ENCODE measurements at regions of chr22 and their contacts with region 1.

Region 1: DNA sequence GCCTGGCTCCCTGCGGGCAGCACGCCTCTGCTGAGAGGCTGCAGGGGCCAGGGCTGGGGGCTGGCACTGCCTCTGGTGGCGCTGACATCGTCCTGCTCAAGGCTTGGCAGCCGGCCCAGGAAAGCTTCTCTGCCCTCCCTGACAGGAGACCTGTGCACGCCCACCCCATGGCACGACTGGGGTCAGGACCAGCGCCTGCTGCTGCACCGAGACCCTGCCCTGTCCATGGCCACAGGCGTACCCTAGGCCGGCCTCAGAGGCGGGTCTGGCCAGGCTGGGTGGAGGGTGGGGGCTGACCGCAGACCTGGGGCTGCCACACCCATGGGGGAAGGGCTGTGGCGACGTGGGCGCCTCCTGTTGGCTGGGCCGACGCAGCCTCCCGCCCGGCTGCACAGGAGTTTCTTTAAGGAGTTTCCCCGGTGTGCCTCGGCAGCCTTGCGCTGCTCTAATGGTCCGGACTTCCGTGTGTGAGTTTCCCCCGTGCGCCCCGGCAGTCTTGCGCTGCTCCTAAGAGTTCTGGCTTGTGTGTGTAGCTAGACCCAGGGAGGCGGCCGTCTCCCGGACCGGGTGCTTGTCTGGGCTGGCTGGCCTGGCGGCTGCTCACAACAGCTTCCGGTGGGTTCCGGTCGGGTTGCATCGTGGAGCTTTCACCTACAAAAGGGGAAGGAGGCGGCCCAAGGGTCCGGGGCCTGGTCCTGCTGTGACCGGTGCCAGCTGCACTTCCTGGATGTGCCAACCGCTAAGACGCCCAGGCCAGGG is 4.6 kb downstream of the TRABD start:
- DNase-seq: peak; percentile 72 to 93 (median 82)
- ATAC-seq: peak; percentile 51
- H3K4me3 Mint-ChIP-seq: peak overlapping the region; percentile 85 to 95 (median 90)
- H3K27ac Mint-ChIP-seq: peak overlapping the region; percentile 94 to 100 (median 100)
- H3K4me1 Mint-ChIP-seq: peaks cover 18 to 62% (median 51%) of the 10 kb centered on the region in 4 donors
- H3K27me3 Mint-ChIP-seq: no peaks in the 10 kb centered on the region

Region 2: DNA sequence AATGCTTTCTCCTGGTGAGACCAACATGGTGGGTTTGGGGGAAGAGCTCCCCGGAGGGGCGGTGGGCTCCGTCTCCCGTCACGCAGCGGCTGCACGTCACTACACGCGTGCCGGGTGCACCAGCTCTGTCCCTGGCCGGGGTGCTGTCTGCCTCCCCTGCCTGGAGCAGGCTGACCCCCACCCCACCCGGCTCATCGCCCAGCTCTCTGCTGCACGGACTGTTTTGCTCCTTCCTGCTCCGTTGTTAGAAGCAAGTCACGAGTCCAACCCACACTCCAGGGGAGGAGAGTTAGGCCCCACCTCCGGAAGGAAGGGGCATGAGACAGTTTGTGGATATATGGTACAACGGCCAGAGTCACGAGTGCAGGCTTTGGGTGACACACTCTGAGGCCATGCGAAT is 727.6 kb before region 1 on chr22:
- POLR2A ChIA-PET with region 1: no interaction called
- DNase-seq: no peak
- ATAC-seq: no peak
- H3K4me3 Mint-ChIP-seq: no peak overlapping the region
- H3K27ac Mint-ChIP-seq: no peak overlapping the region
- H3K4me1 Mint-ChIP-seq: peaks cover 0 to 2% (median 0%) of the 10 kb centered on the region in 4 donors
- H3K27me3 Mint-ChIP-seq: peaks cover 0 to 18% (median 5%) of the 10 kb centered on the region in 5 donors

Region 3: DNA sequence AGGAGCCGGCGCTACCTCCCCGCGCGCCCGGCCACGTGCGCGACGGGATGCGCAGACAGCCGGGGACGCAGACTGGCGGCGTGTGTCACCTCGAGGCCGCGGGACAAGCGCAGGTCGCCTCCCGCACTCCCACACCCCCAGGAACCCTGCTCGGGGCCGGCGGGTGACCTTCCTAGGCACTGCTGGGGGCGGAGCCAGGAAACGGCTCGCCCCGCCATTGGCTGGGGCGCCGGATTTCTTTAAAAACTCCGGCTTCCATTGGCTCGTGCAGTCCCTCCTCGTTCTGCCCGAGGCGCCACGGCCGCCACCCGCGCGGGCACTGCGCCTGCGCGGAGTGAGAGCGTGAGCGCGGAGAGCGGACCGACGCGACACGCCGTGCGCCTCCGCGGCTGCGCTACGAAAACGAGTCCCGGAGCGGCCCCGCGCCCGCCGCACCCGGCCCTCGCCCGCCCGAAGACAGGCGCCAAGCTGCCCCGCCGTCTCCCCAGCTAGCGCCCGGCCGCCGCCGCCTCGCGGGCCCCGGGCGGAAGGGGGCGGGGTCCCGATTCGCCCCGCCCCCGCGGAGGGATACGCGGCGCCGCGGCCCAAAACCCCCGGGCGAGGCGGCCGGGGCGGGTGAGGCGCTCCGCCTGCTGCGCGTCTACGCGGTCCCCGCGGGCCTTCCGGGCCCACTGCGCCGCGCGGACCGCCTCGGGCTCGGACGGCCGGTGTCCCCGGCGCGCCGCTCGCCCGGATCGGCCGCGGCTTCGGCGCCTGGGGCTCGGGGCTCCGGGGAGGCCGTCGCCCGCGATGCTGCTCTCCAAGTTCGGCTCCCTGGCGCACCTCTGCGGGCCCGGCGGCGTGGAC is 230.0 kb before region 1 on chr22 and contains the start of gene PIM3:
- POLR2A ChIA-PET with region 1: interaction called, 10 read pairs
- DNase-seq: peak; percentile 85 to 95 (median 90)
- ATAC-seq: peak; percentile 67 to 75
- H3K4me3 Mint-ChIP-seq: peak within 1 kb of the TSS; percentile 83 to 93 (median 90)
- H3K27ac Mint-ChIP-seq: peak within 1 kb of the TSS; percentile 77 to 98 (median 91)
- H3K4me1 Mint-ChIP-seq: peaks cover 16 to 41% (median 29%) of the 10 kb centered on the region in 4 donors
- H3K27me3 Mint-ChIP-seq: no peaks in the 10 kb centered on the region
- polyA plus RNA-seq, gene PIM3: 12.4 to 26.0 (median 13.6) TPM

Region 4: GRCh38 chr22:50141891-50142363 is 48.4 kb before region 1 on chr22:
- POLR2A ChIA-PET with region 1: no interaction called
- DNase-seq: no peak
- ATAC-seq: no peak
- H3K4me3 Mint-ChIP-seq: no peak overlapping the region
- H3K27ac Mint-ChIP-seq: no peak overlapping the region
- H3K4me1 Mint-ChIP-seq: peaks cover 0 to 3% (median 0%) of the 10 kb centered on the region in 4 donors
- H3K27me3 Mint-ChIP-seq: peaks cover 0 to 8% (median 7%) of the 10 kb centered on the region in 5 donors

Region 5: DNA sequence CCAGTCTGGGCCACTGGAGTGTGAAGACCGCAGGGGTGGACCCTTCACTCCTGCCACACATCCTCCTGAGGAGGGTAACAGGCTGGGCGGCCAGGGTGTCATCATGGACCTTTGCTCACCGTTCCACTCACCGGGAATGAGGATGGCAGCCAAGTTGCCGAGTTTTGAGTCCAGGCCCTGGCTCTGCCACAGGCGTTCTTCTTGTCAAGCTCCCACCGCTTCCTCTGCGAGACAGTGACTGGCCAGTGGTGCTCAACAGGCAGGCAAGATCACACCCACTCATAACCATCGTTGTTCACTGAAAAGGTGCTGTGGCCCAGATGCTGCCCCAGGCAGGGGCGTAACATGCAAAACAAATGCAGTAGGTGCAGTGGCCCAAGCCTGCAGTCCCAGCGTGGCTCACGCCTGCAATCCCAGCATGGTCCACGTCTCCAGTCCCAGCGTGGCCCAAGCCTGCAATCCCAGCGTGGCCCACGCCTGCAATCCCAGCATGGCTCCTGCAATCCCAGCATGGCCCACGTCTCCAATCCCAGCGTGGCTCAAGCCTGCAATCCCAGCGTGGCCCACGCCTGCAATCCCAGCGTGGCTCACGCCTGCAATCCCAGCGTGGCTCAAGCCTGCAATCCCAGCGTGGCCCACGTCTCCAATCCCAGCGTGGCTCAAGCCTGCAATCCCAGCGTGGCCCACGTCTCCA is 24.8 kb before region 1 on chr22:
- POLR2A ChIA-PET with region 1: no interaction called
- DNase-seq: peak in 1 of 10 donors; percentile 53
- ATAC-seq: no peak
- H3K4me3 Mint-ChIP-seq: no peak overlapping the region
- H3K27ac Mint-ChIP-seq: no peak overlapping the region
- H3K4me1 Mint-ChIP-seq: peaks cover 2 to 11% (median 5%) of the 10 kb centered on the region in 4 donors
- H3K27me3 Mint-ChIP-seq: peaks cover 6 to 33% (median 23%) of the 10 kb centered on the region in 5 donors

Region 6: GRCh38 chr22:50200461-50201190 is 10.3 kb after region 1 on chr22 and contains the start of gene SELENOO:
- POLR2A ChIA-PET with region 1: interaction called, 23 read pairs
- DNase-seq: peak; percentile 82 to 92 (median 86)
- ATAC-seq: peak; percentile 86 to 88
- H3K4me3 Mint-ChIP-seq: peak within 1 kb of the TSS; percentile 73 to 88 (median 84)
- H3K27ac Mint-ChIP-seq: peak within 1 kb of the TSS in 8 of 10 donors; percentile 71 to 94 (median 89)
- H3K4me1 Mint-ChIP-seq: peaks cover 9 to 41% (median 38%) of the 10 kb centered on the region in 4 donors
- H3K27me3 Mint-ChIP-seq: no peaks in the 10 kb centered on the region
- polyA plus RNA-seq, gene SELENOO: 3.1 to 8.8 (median 5.2) TPM

Region 7: GRCh38 chr22:50244420-50245213 is 54.3 kb after region 1 on chr22 and contains the start of gene TUBGCP6:
- POLR2A ChIA-PET with region 1: interaction called, 20 read pairs
- DNase-seq: peak; percentile 83 to 93 (median 90)
- ATAC-seq: peak; percentile 79 to 81
- H3K4me3 Mint-ChIP-seq: peak within 1 kb of the TSS; percentile 85 to 100 (median 99)
- H3K27ac Mint-ChIP-seq: peak within 1 kb of the TSS; percentile 98 to 100 (median 100)
- H3K4me1 Mint-ChIP-seq: peaks cover 11 to 60% (median 31%) of the 10 kb centered on the region in 4 donors
- H3K27me3 Mint-ChIP-seq: no peaks in the 10 kb centered on the region
- polyA plus RNA-seq, gene TUBGCP6: 9.3 to 25.2 (median 17.3) TPM

Region 8: GRCh38 chr22:50250555-50251476 is 60.5 kb after region 1 on chr22 and contains the start of gene HDAC10:
- POLR2A ChIA-PET with region 1: interaction called, 20 read pairs
- DNase-seq: peak; percentile 59 to 87 (median 71)
- ATAC-seq: peak; percentile 72 to 82
- H3K4me3 Mint-ChIP-seq: peak within 1 kb of the TSS; percentile 60 to 87 (median 77)
- H3K27ac Mint-ChIP-seq: peak within 1 kb of the TSS; percentile 23 to 83 (median 62)
- H3K4me1 Mint-ChIP-seq: peaks cover 0 to 25% (median 7%) of the 10 kb centered on the region in 4 donors
- H3K27me3 Mint-ChIP-seq: no peaks in the 10 kb centered on the region
- polyA plus RNA-seq, gene HDAC10: 5.4 to 7.8 (median 6.4) TPM

Region 9: GRCh38 chr22:50469377-50470305 is 279.3 kb after region 1 on chr22:
- POLR2A ChIA-PET with region 1: interaction called, 11 read pairs
- DNase-seq: peak; percentile 87 to 100 (median 96)
- ATAC-seq: peak; percentile 78 to 87
- H3K4me3 Mint-ChIP-seq: peak overlapping the region; percentile 75 to 98 (median 86)
- H3K27ac Mint-ChIP-seq: peak overlapping the region; percentile 88 to 98 (median 96)
- H3K4me1 Mint-ChIP-seq: peaks cover 40 to 86% (median 74%) of the 10 kb centered on the region in 4 donors
- H3K27me3 Mint-ChIP-seq: no peaks in the 10 kb centered on the region